B cell (primary cell): ENCODE measurements at regions of chr4 and their contacts with region 1.

Region 1: DNA sequence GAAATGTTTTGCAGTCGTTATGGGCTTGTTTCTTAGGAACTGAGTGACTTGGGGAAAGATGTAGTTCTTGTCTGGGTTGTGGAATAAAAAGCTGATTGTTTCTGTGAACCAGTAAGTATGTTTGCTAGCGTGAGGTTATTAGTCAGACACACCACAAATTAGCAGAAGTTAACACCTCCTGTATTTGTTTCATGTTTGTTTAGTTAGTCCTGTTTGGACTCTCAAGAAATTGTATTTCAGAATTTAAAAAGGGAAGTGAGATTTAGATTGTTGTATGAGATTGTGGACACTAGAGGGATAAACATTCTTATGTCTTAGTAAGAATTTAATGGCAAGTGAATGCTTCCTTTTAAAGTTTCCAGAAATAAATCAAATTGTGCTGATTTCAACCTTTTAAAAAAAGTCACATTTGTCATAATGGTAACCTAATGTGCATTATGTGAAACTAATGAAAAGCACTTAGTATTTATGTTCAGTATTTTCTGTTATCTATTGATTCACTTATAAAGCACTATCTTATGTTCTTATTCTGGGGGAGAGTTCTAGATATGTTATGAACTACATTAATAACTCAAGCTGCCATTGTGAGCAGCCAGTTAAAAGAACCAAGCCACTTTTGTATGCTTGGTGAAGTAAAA is 25.6 kb downstream of the ATP10D start:
- DNase-seq: peak; percentile 66
- ATAC-seq: peak; percentile 85
- H3K4me3 ChIP-seq: peak overlapping the region in 1 of 5 experiments; percentile 27
- H3K4me3 Mint-ChIP-seq: peak overlapping the region; percentile 64
- H3K27ac ChIP-seq: peak overlapping the region; percentile 52 to 66
- H3K27ac Mint-ChIP-seq: peak overlapping the region; percentile 77
- H3K4me1 ChIP-seq: peaks cover 40 to 63% of the 10 kb centered on the region in 2 donors
- H3K4me1 Mint-ChIP-seq: peaks cover 64% of the 10 kb centered on the region
- H3K27me3 ChIP-seq: no peaks in the 10 kb centered on the region
- H3K27me3 Mint-ChIP-seq: no peaks in the 10 kb centered on the region
- CTCF ChIP-seq: peak; percentile 73

Region 2: DNA sequence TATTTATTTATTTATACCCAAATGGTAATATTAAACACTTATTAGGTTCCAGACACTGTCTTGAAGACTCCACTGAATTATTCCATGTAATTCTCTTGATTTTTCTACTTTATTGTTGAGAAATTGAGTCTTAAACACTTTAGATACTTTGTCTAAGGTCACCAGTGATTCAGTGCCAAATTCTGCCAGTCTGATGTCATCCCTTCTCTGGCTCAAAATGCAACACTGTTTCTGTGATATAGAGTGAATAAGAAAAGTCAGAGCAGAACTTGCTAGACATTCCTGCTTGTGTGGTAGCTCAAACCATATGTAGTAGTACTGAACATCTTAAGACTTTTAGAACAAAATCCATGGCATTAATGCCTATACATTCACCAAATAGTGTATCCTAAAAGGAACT is 314.9 kb before region 1 on chr4:
- CTCF ChIA-PET with region 1: no interaction called
- POLR2A ChIA-PET with region 1: no interaction called
- intact Hi-C with region 1: no loop called
- DNase-seq: no peak
- ATAC-seq: no peak
- H3K4me3 ChIP-seq: no peak overlapping the region
- H3K4me3 Mint-ChIP-seq: no peak overlapping the region
- H3K27ac ChIP-seq: no peak overlapping the region
- H3K27ac Mint-ChIP-seq: no peak overlapping the region
- H3K4me1 ChIP-seq: no peaks in the 10 kb centered on the region
- H3K4me1 Mint-ChIP-seq: no peaks in the 10 kb centered on the region
- H3K27me3 ChIP-seq: no peaks in the 10 kb centered on the region
- H3K27me3 Mint-ChIP-seq: no peaks in the 10 kb centered on the region
- CTCF ChIP-seq: no peak

Region 3: GRCh38 chr4:47490550-47490949 is 20.1 kb before region 1 on chr4:
- CTCF ChIA-PET with region 1: interaction called, 6 read pairs
- POLR2A ChIA-PET with region 1: interaction called, 8 read pairs
- intact Hi-C with region 1: loop called (anchors 2 kb)
- DNase-seq: peak; percentile 57
- ATAC-seq: peak; percentile 87
- H3K4me3 ChIP-seq: no peak overlapping the region
- H3K4me3 Mint-ChIP-seq: peak overlapping the region; percentile 71
- H3K27ac ChIP-seq: peak overlapping the region in 1 of 2 donors; percentile 73
- H3K27ac Mint-ChIP-seq: peak overlapping the region; percentile 82
- H3K4me1 ChIP-seq: peaks cover 26 to 66% of the 10 kb centered on the region in 2 donors
- H3K4me1 Mint-ChIP-seq: peaks cover 66% of the 10 kb centered on the region
- H3K27me3 ChIP-seq: no peaks in the 10 kb centered on the region
- H3K27me3 Mint-ChIP-seq: no peaks in the 10 kb centered on the region
- CTCF ChIP-seq: peak; percentile 72

Region 4: DNA sequence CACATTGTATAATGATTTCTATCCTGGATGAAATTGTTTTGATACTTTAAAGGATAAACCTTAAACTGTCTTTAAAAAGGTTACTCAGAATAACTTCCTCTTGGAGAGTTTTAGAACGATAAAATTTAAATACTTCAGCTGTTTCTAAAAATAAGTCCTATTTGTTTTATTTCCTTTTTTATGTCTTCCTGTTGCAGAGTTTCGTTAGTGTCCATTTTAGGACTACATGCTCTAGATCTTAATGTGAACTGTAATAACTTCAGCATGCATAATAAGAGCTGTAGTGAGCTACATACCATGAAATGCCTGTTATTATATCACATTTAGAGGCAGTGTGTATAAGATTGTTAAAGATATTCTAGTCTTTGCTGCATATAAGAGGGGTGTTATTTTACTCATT is 10.9 kb before region 1 on chr4:
- CTCF ChIA-PET with region 1: interaction called, 13 read pairs
- POLR2A ChIA-PET with region 1: interaction called, 5 read pairs
- intact Hi-C with region 1: loop called (anchors 1 kb)
- DNase-seq: peak; percentile 57
- ATAC-seq: peak; percentile 77
- H3K4me3 ChIP-seq: peak overlapping the region in 3 of 5 experiments; percentile 17 to 55 (median 38)
- H3K4me3 Mint-ChIP-seq: no peak overlapping the region
- H3K27ac ChIP-seq: peak overlapping the region; percentile 85 to 86
- H3K27ac Mint-ChIP-seq: no peak overlapping the region
- H3K4me1 ChIP-seq: peaks cover 44% of the 10 kb centered on the region in 2 donors
- H3K4me1 Mint-ChIP-seq: peaks cover 34% of the 10 kb centered on the region
- H3K27me3 ChIP-seq: no peaks in the 10 kb centered on the region
- H3K27me3 Mint-ChIP-seq: no peaks in the 10 kb centered on the region
- CTCF ChIP-seq: no peak

Region 5: GRCh38 chr4:47612116-47613023 is 101.7 kb after region 1 on chr4:
- CTCF ChIA-PET with region 1: no interaction called
- POLR2A ChIA-PET with region 1: no interaction called
- intact Hi-C with region 1: no loop called
- DNase-seq: no peak
- ATAC-seq: no peak
- H3K4me3 ChIP-seq: no peak overlapping the region
- H3K4me3 Mint-ChIP-seq: no peak overlapping the region
- H3K27ac ChIP-seq: no peak overlapping the region
- H3K27ac Mint-ChIP-seq: no peak overlapping the region
- H3K4me1 ChIP-seq: no peaks in the 10 kb centered on the region
- H3K4me1 Mint-ChIP-seq: no peaks in the 10 kb centered on the region
- H3K27me3 ChIP-seq: no peaks in the 10 kb centered on the region
- H3K27me3 Mint-ChIP-seq: no peaks in the 10 kb centered on the region
- CTCF ChIP-seq: no peak